Activated CD4-positive, alpha-beta memory T cell treated with anti-CD3 and anti-CD28 coated beads, Interleukin-2, amount 10 ng/mL, durations not matched to agents 7 days and 5 days (primary cell): ENCODE measurements at regions of chr19 and their contacts with region 1.

Region 1: DNA sequence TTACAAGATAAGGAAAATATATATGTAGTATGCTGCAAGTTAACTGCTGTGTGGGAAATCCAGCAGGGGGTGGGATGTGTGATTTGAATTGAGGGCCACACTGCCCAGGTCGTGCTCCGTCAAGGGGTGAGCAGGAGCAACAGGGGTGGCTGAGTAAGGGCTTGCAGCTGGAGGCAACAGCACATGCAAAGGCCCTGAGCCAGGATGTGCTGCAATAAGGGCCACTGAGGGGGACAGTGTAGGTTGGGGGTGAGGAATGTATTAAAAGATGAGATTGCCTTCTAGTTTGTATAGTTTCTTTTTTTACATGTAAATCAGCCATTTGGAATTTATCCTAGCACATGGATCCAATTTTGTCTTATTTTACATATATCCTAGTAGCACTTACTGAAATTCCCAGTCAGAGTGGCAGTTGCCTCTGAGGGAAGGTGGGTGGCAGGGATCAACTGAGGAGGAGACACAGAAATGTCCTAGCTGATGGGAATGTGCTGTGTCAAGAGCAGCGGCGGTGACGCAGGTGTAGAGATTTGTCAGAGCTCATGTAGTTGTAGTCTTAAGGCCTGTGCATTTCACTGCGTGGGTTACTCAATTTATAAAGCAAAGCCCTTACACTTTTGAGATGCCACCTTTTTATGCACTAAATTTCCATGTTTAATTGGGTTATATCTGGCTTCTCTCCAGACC is 5.4 kb upstream of the RBM42 start:
- DNase-seq: no peak
- H3K4me3 Mint-ChIP-seq: no peak overlapping the region
- H3K27ac Mint-ChIP-seq: no peak overlapping the region
- H3K4me1 Mint-ChIP-seq: peaks cover 5% of the 10 kb centered on the region
- H3K27me3 Mint-ChIP-seq: no peaks in the 10 kb centered on the region

Region 2: DNA sequence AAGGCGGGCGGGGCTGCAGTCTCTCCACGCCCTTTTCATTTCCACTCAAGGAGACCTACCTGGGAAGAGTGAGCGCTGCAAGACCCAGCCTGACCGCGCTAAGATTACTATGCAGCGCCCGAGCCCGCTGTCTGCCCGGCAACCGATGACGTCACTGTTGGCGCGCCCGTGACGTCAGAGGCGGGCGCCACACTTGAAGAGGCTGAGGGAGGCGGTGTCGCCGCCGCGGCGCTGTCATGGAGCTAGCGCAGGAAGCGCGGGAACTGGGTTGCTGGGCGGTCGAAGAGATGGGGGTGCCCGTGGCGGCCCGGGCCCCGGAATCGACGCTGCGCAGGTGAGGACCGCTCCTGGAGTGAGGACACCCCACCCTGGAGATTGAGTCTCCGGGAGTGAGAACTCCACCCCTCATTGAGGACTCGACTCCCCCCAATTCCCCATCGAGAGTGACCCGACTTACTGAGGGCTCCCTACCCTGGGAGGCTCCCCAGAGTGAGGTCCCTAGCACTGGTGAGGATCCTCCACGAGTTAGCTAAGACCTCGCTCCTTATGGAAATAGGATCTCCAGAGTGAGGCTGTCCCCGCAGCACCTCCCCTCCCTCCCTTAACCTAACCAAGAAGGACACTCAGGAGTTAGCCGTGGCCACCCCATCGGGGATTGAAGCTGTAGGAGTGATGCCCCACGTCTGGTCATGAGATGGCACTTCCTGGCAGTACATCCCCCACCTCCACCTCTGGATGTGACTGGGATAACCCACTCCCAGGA is 10.7 kb before region 1 on chr19 and contains the start of gene HAUS5:
- CTCF ChIA-PET with region 1: no interaction called
- POLR2A ChIA-PET with region 1: interaction called, 24 read pairs
- DNase-seq: peak; percentile 97
- H3K4me3 Mint-ChIP-seq: peak within 1 kb of the TSS; percentile 84
- H3K27ac Mint-ChIP-seq: peak within 1 kb of the TSS; percentile 86
- H3K4me1 Mint-ChIP-seq: peaks cover 49% of the 10 kb centered on the region
- H3K27me3 Mint-ChIP-seq: no peaks in the 10 kb centered on the region
- total RNA-seq, gene HAUS5: 45.3 to 46.5 TPM